ENCODE measurements at regions of chr17 and their contacts with region 1.

Region 1: GRCh38 chr17:45197555-45198334 is 23.9 kb upstream of the FMNL1 start:
- DNase-seq: peak; percentile 10
- H3K4me3 ChIP-seq: peak overlapping the region; percentile 12; the same call in 1 of the 2 replicates
- CTCF ChIP-seq: peak; percentile 99

Region 2: DNA sequence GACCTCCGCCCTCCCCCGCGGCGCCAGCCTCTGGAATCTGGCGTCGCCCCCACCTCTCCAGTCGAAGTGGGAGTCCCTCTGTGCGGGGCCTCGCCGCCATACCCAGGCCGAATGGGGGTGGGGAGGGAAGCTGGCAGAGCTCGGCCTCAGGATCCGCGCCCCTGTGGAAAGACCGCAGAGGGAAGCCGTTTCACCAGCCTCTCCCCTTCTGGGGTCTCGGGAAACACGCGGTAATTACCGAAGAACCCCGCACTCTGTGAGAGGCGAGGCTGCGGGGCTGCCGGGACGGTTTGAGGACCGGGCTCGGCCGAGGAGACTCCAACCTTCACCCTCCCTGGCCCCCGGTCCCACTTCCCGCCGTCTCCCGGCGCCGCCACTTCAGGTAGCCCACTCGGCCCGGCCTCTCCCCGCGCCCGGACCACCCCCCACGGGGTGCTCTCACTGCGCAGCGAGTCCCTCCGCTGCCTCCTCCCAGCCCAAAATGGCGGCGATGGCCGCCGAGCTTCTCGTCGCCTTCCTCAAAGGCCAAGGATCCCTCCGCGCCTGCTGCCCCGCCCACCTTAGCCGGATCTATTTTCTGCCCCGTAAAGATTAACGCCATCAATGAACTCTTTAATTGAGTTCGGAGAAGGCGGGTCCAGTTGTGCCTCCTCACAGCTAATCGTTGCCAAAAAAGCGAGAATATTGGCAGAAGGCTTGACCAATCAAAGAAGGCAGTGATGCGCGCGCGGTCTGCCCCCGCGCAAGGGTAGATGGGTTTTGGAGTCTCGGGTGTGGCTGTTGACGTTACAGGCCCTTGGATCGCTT is 36.5 kb before region 1 on chr17:
- CTCF ChIA-PET with region 1: interaction called, 399 read pairs
- POLR2A ChIA-PET with region 1: interaction called, 3 read pairs
- DNase-seq: peak; percentile 100
- H3K4me3 ChIP-seq: peak overlapping the region; percentile 92
- CTCF ChIP-seq: no peak

Region 3: GRCh38 chr17:45172454-45173286 is 25.1 kb before region 1 on chr17:
- CTCF ChIA-PET with region 1: interaction called, 48 read pairs
- POLR2A ChIA-PET with region 1: no interaction called
- DNase-seq: no peak
- H3K4me3 ChIP-seq: peak overlapping the region; percentile 30
- CTCF ChIP-seq: no peak

Region 4: DNA sequence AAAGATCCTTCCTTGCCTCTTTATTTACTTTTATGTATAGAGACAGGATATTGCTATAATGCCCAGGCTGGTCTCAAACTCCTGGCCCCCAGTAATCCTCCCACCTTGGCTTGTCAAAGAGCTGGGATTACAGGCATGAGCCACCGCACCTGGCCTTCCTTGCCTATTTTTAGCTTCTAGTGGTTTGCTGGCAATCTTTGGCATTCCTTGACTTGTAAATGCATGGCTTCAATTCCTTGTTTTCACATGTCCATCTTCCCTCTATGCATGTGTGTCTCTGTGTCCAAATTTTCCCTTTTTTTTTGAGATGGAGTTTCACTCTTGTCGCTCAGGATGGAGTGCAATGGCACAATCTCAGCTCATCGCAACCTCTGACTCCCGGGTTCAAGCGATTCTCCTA is 13.6 kb before region 1 on chr17:
- CTCF ChIA-PET with region 1: interaction called, 34 read pairs
- POLR2A ChIA-PET with region 1: no interaction called
- DNase-seq: no peak
- H3K4me3 ChIP-seq: no peak overlapping the region
- CTCF ChIP-seq: no peak

Region 5: GRCh38 chr17:45235416-45236281 is 37.9 kb after region 1 on chr17:
- CTCF ChIA-PET with region 1: interaction called, 10 read pairs
- POLR2A ChIA-PET with region 1: no interaction called
- DNase-seq: peak; percentile 9
- H3K4me3 ChIP-seq: no peak overlapping the region
- CTCF ChIP-seq: peak; percentile 87

Measured in AG04449 (cell line).